Calu3 (cell line): ENCODE measurements at regions of chr15 and their contacts with region 1.

Region 1: GRCh38 chr15:96053031-96053780 is 277.3 kb upstream of the NR2F2 start:
- DNase-seq: peak; percentile 75
- H3K4me3 Mint-ChIP-seq: peak overlapping the region; percentile 67
- H3K27ac Mint-ChIP-seq: peak overlapping the region; percentile 93
- H3K4me1 Mint-ChIP-seq: peaks cover 25% of the 10 kb centered on the region
- H3K27me3 Mint-ChIP-seq: no peaks in the 10 kb centered on the region
- CTCF ChIP-seq: no peak

Region 2: DNA sequence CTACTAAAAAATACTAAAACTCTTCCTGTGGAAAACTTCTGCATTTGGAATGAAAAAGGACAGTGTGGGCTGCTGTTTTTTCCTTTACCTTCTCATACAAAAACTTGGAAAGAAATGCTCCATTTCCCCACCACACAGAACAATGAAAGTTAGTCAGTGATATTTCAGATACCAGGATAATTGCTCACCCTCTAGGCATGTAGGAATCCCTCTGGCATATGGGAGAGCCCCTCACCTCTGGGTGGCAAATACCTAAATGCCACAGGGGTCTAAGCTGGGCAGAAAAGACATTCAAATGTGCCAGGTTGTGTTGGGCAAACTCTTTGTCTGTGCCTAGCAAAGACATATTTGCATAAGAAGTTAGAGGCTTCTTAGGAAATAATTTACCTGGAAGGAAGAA is 283.0 kb before region 1 on chr15:
- CTCF ChIA-PET with region 1: no interaction called
- intact Hi-C with region 1: loop called (anchors 2 kb)
- DNase-seq: peak; percentile 69
- H3K4me3 Mint-ChIP-seq: peak overlapping the region; percentile 25
- H3K27ac Mint-ChIP-seq: peak overlapping the region; percentile 73
- H3K4me1 Mint-ChIP-seq: peaks cover 16% of the 10 kb centered on the region
- H3K27me3 Mint-ChIP-seq: no peaks in the 10 kb centered on the region
- CTCF ChIP-seq: no peak

Region 3: DNA sequence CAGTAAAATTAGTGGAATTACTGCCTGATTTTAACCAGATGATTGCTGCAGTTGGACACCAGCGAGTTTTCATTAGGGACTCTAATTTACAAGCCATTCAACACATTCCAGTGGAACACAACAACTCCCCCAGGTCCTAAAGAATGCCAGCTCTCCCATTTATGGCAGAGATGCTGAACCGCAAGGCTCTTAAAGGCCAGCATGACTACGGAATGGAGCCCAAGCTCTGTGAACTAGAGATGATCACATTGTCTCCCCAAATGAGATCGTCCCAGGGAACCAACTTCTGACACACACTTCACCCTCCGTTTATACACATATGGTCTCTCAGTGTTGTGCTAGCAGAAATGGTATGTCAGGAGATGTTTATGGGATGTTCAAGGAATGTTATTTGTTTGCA is 168.9 kb before region 1 on chr15:
- CTCF ChIA-PET with region 1: no interaction called
- intact Hi-C with region 1: no loop called
- DNase-seq: no peak
- H3K4me3 Mint-ChIP-seq: no peak overlapping the region
- H3K27ac Mint-ChIP-seq: no peak overlapping the region
- H3K4me1 Mint-ChIP-seq: peaks cover 15% of the 10 kb centered on the region
- H3K27me3 Mint-ChIP-seq: no peaks in the 10 kb centered on the region
- CTCF ChIP-seq: no peak

Region 4: GRCh38 chr15:95988351-95988805 is 64.8 kb before region 1 on chr15:
- CTCF ChIA-PET with region 1: no interaction called
- intact Hi-C with region 1: no loop called
- DNase-seq: no peak
- H3K4me3 Mint-ChIP-seq: no peak overlapping the region
- H3K27ac Mint-ChIP-seq: no peak overlapping the region
- H3K4me1 Mint-ChIP-seq: peaks cover 22% of the 10 kb centered on the region
- H3K27me3 Mint-ChIP-seq: no peaks in the 10 kb centered on the region
- CTCF ChIP-seq: no peak

Region 5: DNA sequence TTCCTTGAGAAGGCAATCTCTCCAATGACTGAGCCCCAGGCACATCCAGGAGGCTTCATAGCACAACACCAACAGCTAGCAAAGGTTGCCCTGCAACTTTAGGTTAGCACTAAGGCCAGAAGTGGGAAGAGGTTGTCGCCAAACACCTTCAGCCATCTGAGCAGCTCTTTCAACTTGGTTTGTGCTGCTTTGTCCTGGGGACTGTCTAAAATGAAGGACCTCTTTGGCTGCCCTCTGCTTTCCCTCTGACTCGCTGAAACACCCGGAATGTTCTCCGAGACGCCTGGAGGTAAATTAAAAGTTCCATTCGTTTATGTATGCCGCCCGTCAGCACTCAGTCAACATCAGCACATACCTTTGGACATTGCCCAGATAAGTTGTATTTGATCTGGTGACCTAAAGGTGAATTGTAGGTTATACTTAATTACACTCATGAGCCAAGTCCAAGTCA is 156.1 kb after region 1 on chr15:
- CTCF ChIA-PET with region 1: no interaction called
- intact Hi-C with region 1: no loop called
- DNase-seq: peak; percentile 32
- H3K4me3 Mint-ChIP-seq: no peak overlapping the region
- H3K27ac Mint-ChIP-seq: peak overlapping the region; percentile 47
- H3K4me1 Mint-ChIP-seq: peaks cover 18% of the 10 kb centered on the region
- H3K27me3 Mint-ChIP-seq: no peaks in the 10 kb centered on the region
- CTCF ChIP-seq: no peak

Region 6: GRCh38 chr15:96362755-96363651 is 309.8 kb after region 1 on chr15:
- CTCF ChIA-PET with region 1: no interaction called
- intact Hi-C with region 1: no loop called
- DNase-seq: no peak
- H3K4me3 Mint-ChIP-seq: no peak overlapping the region
- H3K27ac Mint-ChIP-seq: no peak overlapping the region
- H3K4me1 Mint-ChIP-seq: peaks cover 12% of the 10 kb centered on the region
- H3K27me3 Mint-ChIP-seq: no peaks in the 10 kb centered on the region
- CTCF ChIP-seq: no peak